ENCODE measurements at regions of chr1 and their contacts with region 1.

Region 1: GRCh38 chr1:27154991-27155781 is at the start of gene SLC9A1:
- DNase-seq: peak; percentile 96 to 97 (median 96)
- H3K4me3 ChIP-seq: peak within 1 kb of the TSS; percentile 72 to 84 (median 83)
- H3K4me3 Mint-ChIP-seq: peak within 1 kb of the TSS; percentile 87 to 97
- H3K27ac ChIP-seq: peak within 1 kb of the TSS; percentile 78 to 97
- H3K27ac Mint-ChIP-seq: peak within 1 kb of the TSS; percentile 98 to 100 (median 99)
- H3K4me1 ChIP-seq: peaks cover 42 to 51% of the 10 kb centered on the region in 2 donors
- H3K4me1 Mint-ChIP-seq: peaks cover 48% of the 10 kb centered on the region
- H3K27me3 ChIP-seq: no peaks in the 10 kb centered on the region
- H3K27me3 Mint-ChIP-seq: peaks cover 0 to 4% (median 2%) of the 10 kb centered on the region in 3 donors
- CTCF ChIP-seq: peak; percentile 86
- polyA plus RNA-seq, gene SLC9A1: 4.5 to 14.2 (median 4.6) TPM

Region 2: DNA sequence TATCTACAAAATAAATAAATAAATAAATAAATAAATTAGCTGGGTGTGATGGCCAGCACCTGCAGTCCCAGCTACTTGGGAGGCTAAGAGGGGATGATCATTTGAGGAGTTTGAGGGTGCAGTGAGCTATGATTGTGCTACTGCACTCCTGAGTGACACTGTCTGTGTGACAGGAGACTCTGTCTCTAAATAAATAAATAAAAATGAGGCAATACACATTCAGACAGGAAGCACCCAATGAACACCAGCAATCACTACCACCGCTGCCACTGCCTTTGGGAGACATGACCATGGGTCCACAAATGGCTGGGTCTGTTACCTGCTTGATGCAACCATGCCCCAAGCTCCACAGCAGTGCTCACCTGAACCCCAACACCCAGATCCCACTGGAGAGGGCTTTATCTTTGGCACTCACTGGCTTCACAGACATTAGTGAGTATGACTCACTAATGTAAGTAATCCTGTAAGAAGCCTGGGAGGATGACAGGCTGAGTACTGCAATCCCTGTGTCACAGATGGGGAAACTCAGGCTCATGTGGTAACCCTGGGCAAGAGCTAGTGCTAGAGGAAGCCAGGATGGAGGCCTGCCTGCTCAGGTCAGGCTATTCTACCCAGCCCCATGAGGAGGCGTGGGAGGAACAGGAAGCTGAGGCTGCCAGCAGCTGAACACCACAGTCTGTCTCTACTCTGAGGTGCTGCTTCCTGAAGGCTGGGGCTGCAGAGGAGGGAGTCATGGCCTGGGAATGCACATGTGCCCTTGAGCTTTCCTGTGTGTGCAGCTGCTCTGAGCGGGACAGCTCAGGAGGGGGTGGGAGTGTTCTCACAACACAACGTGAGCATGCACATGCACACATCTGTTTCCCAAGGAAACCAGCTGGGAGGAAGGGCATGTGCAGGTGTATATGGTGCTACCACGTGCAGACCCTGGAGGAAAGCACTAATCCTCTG is 43.3 kb before region 1 on chr1:
- intact Hi-C with region 1: loop called (anchors 1 to 5 kb)
- DNase-seq: peak; percentile 99 to 100 (median 100)
- H3K4me3 ChIP-seq: no peak overlapping the region
- H3K4me3 Mint-ChIP-seq: peak overlapping the region in 1 of 2 donors; percentile 53
- H3K27ac ChIP-seq: peak overlapping the region; percentile 95 to 98
- H3K27ac Mint-ChIP-seq: peak overlapping the region; percentile 98 to 100 (median 100)
- H3K4me1 ChIP-seq: peaks cover 65 to 70% of the 10 kb centered on the region in 2 donors
- H3K4me1 Mint-ChIP-seq: peaks cover 68% of the 10 kb centered on the region
- H3K27me3 ChIP-seq: no peaks in the 10 kb centered on the region
- H3K27me3 Mint-ChIP-seq: no peaks in the 10 kb centered on the region
- CTCF ChIP-seq: peak; percentile 61

Region 3: DNA sequence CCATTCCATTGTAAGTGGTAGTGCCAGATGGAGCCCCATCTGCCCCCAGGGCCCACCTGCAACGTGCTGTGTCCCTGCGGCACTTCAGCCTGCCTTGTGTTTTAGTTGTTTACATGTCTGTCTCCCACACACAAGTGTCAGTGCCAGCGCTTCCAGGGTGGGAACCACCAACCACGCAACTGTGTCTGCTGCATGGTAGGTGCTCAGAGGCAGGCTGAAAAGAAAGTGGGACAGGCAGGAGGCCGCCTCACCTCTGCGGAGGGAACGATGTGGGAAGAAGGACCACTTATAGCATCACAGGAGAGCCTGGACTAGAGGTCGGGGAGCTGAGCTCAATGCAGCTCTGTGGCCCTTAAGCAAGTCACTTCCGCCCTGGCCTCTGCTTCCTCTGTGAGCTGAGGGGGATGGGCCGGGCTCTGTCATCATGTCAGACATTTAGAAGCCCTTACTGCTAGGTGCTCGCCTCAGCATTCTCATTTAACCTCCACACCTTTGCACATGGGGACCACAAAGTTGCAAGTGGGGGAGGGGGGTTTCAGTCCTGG is 18.1 kb before region 1 on chr1:
- intact Hi-C with region 1: loop called in 1 of 2 experiments (anchors 2 kb)
- DNase-seq: peak; percentile 83 to 90 (median 87)
- H3K4me3 ChIP-seq: peak overlapping the region in 2 of 3 experiments; percentile 10 to 61
- H3K4me3 Mint-ChIP-seq: peak overlapping the region; percentile 70 to 91
- H3K27ac ChIP-seq: peak overlapping the region; percentile 97 to 99
- H3K27ac Mint-ChIP-seq: peak overlapping the region; percentile 99 to 100 (median 99)
- H3K4me1 ChIP-seq: peaks cover 78 to 80% of the 10 kb centered on the region in 2 donors
- H3K4me1 Mint-ChIP-seq: peaks cover 88% of the 10 kb centered on the region
- H3K27me3 ChIP-seq: no peaks in the 10 kb centered on the region
- H3K27me3 Mint-ChIP-seq: peaks cover 0 to 2% (median 0%) of the 10 kb centered on the region in 3 donors
- CTCF ChIP-seq: no peak

Region 4: GRCh38 chr1:27192039-27192529 is 36.9 kb after region 1 on chr1:
- intact Hi-C with region 1: loop called in 1 of 2 experiments (anchors 5 kb)
- DNase-seq: peak; percentile 66 to 76 (median 66)
- H3K4me3 ChIP-seq: no peak overlapping the region
- H3K4me3 Mint-ChIP-seq: peak overlapping the region; percentile 9 to 68
- H3K27ac ChIP-seq: no peak overlapping the region
- H3K27ac Mint-ChIP-seq: peak overlapping the region in 5 of 7 donors; percentile 75 to 90 (median 89)
- H3K4me1 ChIP-seq: peaks cover 14 to 18% of the 10 kb centered on the region in 2 donors
- H3K4me1 Mint-ChIP-seq: peaks cover 14% of the 10 kb centered on the region
- H3K27me3 ChIP-seq: no peaks in the 10 kb centered on the region
- H3K27me3 Mint-ChIP-seq: peaks cover 2 to 6% (median 2%) of the 10 kb centered on the region in 3 donors
- CTCF ChIP-seq: no peak

Region 5: GRCh38 chr1:27234049-27234882 is 79.1 kb after region 1 on chr1 and contains the start of gene WDTC1:
- intact Hi-C with region 1: no loop called
- DNase-seq: peak; percentile 95 to 97 (median 96)
- H3K4me3 ChIP-seq: peak within 1 kb of the TSS; percentile 50 to 94 (median 81)
- H3K4me3 Mint-ChIP-seq: peak within 1 kb of the TSS; percentile 99
- H3K27ac ChIP-seq: peak within 1 kb of the TSS in 1 of 2 donors; percentile 68
- H3K27ac Mint-ChIP-seq: peak within 1 kb of the TSS; percentile 82 to 98 (median 92)
- H3K4me1 ChIP-seq: peaks cover 18 to 29% of the 10 kb centered on the region in 2 donors
- H3K4me1 Mint-ChIP-seq: peaks cover 31% of the 10 kb centered on the region
- H3K27me3 ChIP-seq: no peaks in the 10 kb centered on the region
- H3K27me3 Mint-ChIP-seq: peaks cover 0 to 3% (median 0%) of the 10 kb centered on the region in 3 donors
- CTCF ChIP-seq: no peak
- polyA plus RNA-seq, gene WDTC1: 2.1 to 26.6 (median 4.3) TPM

Region 6: DNA sequence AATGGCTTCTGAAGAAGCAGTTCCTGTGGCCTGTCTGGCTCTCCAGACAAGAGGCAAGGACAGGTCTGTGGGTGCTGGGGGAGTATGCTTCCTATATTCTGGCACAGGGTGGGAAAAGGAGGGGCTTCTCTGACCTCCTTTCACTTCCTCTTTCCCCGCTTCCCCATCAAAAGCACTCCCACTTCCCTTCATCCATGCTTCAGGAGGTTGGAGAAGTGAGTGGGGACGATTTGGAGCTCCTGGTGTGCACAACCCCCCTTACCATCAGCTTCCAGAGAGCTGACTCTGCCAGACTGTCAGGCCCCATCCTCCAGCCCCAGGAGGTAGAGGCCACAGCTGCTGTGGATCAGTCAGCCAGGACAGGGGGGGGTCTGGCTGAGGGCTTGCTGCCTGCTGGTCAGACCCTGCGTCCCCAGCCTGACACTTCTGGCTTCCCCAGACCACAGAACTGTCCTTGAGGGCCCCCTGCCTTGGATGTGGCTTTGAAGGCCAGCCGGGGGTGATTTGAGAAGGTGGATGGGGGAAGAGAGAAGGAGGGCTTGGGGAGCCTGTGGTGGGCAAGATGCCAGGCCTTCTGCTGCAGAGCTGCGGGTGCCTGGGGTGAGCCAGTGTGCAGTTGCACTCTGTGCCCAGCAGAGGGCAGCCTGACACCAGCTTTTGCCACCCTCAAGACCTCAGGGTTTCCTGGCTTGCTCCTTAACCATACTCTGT is 145.3 kb after region 1 on chr1:
- intact Hi-C with region 1: no loop called
- DNase-seq: peak; percentile 76 to 83 (median 81)
- H3K4me3 ChIP-seq: peak overlapping the region in 1 of 3 experiments; percentile 27
- H3K4me3 Mint-ChIP-seq: no peak overlapping the region
- H3K27ac ChIP-seq: peak overlapping the region; percentile 75 to 84
- H3K27ac Mint-ChIP-seq: peak overlapping the region; percentile 72 to 92 (median 89)
- H3K4me1 ChIP-seq: peaks cover 25 to 26% of the 10 kb centered on the region in 2 donors
- H3K4me1 Mint-ChIP-seq: peaks cover 23% of the 10 kb centered on the region
- H3K27me3 ChIP-seq: no peaks in the 10 kb centered on the region
- H3K27me3 Mint-ChIP-seq: no peaks in the 10 kb centered on the region
- CTCF ChIP-seq: peak; percentile 98